RWPE1 (cell line): ENCODE measurements at regions of chr1 and their contacts with region 1.

Region 1: DNA sequence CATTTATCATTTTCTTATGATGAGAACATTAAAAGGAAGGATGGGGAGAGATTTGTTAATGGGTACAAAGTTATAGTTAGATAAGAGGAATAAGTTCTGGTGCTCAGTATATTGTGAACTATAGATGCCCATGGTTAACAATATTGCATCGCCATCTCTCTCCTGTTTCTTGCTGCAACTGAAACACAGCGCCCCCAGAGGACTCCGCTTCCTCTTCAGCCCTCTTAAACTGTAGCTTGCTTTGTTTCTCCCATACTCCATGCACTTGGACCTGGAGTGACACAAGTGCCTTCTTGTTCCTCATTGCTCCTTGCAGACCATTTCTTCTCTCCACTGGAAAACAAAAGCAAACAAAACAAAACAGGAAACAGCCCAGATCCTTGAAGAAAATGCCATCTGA is 70.1 kb upstream of the NTPCR start:
- DNase-seq: peak; percentile 50
- H3K27ac ChIP-seq: no peak overlapping the region
- CTCF ChIP-seq: peak; percentile 60

Region 2: GRCh38 chr1:232950197-232951176 is 70.1 kb after region 1 on chr1 and contains the start of gene NTPCR:
- CTCF ChIA-PET with region 1: interaction called, 11 read pairs
- POLR2A ChIA-PET with region 1: no interaction called
- DNase-seq: peak; percentile 98
- H3K27ac ChIP-seq: peak within 1 kb of the TSS; percentile 75
- CTCF ChIP-seq: no peak